Heart left ventricle (tissue), 16 donors: ENCODE measurements at regions of chr15 and their contacts with region 1.

Region 1: DNA sequence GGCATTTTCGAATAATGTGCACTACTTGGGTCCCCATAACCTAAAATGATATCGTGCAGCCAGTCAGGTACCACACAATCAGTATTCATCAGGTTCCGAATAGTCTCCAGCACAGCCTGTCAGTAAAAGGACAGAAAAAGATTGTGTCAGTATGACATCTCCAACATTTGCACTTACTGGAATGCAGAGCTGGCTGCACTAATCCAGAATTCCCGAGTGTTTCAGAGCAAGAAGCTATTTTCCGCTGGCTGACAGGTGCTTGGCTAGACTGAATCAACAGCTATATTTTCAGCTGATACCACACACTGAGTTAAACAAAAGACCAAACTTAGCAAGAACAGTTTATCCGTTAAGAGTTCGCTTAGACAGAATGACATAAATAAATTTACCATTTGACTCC is 68.8 kb downstream of the AQR start:
- DNase-seq: peak in 1 of 5 donors; percentile 19
- ATAC-seq: peak; percentile 58 to 94 (median 84)
- H3K4me3 ChIP-seq: no peak overlapping the region
- H3K27ac ChIP-seq: peak overlapping the region in 11 of 12 donors; percentile 9 to 67 (median 49)
- H3K4me1 ChIP-seq: peaks cover 0 to 8% (median 0%) of the 10 kb centered on the region in 12 donors
- H3K27me3 ChIP-seq: no peaks in the 10 kb centered on the region
- CTCF ChIP-seq: no peak
- POLR2A ChIP-seq: no peak

Region 2: DNA sequence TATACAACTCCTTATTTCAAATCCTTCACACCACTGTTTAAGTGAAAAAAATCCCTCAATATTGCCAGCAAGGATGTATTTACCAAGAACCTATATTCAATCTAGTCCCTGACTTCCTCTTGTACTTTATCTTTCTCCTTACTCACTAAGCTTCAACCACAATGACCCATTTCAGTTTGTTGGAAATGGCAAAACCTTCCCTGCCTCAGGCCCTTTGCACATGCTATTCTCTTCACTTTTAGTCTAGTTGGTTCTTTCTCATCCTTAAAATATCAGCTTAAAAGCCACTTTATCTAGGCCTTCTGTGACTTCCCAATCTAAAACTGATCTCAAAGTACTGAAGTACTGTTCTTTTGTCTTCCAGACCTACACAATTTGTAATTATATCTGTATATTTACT is 24.1 kb before region 1 on chr15:
- intact Hi-C with region 1: loop called in 1 of 10 experiments (anchors 2 kb)
- DNase-seq: no peak
- ATAC-seq: no peak
- H3K4me3 ChIP-seq: no peak overlapping the region
- H3K27ac ChIP-seq: no peak overlapping the region
- H3K4me1 ChIP-seq: no peaks in the 10 kb centered on the region
- H3K27me3 ChIP-seq: no peaks in the 10 kb centered on the region
- CTCF ChIP-seq: no peak
- POLR2A ChIP-seq: no peak